CD4-positive, alpha-beta memory T cell (primary cell): ENCODE measurements at regions of chr1 and their contacts with region 1.

Region 1: DNA sequence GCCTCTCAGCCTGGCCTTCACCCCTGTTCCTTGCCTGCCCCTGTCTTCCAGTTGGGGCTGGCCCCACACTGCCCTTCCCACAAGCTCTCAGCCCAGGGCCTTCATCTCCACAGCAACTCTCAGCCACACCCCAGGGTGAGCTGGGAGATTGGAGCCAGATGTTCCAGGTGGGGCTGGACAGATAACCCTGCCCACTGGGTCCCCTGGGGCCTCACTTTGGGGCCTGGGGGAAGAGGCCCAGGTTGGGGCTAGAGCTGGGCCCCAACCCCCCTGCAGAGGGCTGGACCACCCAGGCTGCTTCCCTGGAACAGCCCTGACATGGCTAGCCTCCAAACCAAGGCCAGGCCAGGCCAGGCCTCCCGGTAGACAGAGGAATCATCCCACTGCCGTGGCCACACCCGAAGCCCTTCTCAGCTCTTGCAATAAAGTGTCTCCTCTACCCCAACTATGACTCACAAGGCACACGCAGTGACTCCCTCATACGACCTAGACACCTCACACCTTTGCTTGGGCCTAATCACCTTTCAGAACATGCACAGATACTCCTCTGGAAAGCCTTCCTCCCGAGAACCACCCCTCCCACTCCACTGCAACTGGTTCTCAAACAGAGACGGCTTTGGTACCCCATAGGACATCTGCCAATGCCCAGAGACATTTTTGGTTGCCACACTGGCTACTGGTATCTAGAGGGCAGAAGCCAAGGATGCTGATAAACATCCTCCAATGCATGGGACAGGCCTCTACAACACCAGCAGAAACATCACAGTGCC is 22.2 kb downstream of the SLC2A1 start:
- DNase-seq: peak in 1 of 5 donors; percentile 78
- H3K4me3 ChIP-seq: no peak overlapping the region
- H3K4me3 Mint-ChIP-seq: peak overlapping the region in 7 of 8 donors; percentile 15 to 68 (median 51)
- H3K27ac ChIP-seq: peak overlapping the region; percentile 59
- H3K27ac Mint-ChIP-seq: peak overlapping the region; percentile 83 to 96 (median 95)
- H3K4me1 ChIP-seq: peaks cover 98% of the 10 kb centered on the region
- H3K4me1 Mint-ChIP-seq: peaks cover 77 to 99% (median 91%) of the 10 kb centered on the region in 4 donors
- H3K27me3 ChIP-seq: no peaks in the 10 kb centered on the region
- H3K27me3 Mint-ChIP-seq: no peaks in the 10 kb centered on the region

Region 2: DNA sequence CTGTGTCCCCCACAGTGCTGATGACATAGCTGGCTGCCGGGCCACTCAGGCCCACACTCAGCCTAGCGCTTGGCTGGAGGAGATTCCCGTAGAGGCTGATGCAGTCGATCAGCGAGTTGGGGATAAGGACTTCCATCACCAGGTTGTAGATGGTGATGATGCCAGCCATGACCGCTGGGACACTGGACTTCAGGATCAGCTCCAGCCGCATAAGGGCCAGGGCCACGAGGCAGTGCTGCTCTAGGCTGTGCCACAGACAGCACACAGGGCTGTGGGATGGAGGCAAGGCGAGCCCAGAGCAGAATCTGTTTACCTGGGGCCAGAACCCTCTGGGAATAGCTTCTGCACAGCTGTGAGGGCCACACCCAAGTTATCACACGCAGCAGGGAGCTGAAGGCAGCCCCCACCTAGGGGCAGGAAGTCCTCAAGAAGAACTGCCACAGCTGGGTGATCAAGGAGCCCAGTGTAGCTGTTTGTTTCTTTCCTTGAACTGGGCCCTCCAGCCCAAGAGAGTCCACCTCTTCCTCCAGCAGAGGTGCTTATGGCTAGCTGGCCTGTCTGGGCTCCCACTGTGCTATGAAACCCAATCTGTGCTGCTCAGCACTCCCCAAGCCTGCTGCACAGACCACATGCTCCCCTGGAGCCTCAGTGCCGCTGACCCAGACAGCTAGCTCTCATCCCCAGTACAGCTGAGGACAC is 16.0 kb after region 1 on chr1:
- CTCF ChIA-PET with region 1: interaction called, 18 read pairs
- POLR2A ChIA-PET with region 1: interaction called, 555 read pairs
- intact Hi-C with region 1: no loop called
- DNase-seq: peak in 3 of 5 donors; percentile 32 to 47 (median 37)
- H3K4me3 ChIP-seq: peak overlapping the region; percentile 1 to 38
- H3K4me3 Mint-ChIP-seq: peak overlapping the region; percentile 36 to 72 (median 62)
- H3K27ac ChIP-seq: peak overlapping the region; percentile 50
- H3K27ac Mint-ChIP-seq: peak overlapping the region; percentile 52 to 97 (median 70)
- H3K4me1 ChIP-seq: peaks cover 93% of the 10 kb centered on the region
- H3K4me1 Mint-ChIP-seq: peaks cover 60 to 94% (median 83%) of the 10 kb centered on the region in 4 donors
- H3K27me3 ChIP-seq: no peaks in the 10 kb centered on the region
- H3K27me3 Mint-ChIP-seq: no peaks in the 10 kb centered on the region